IMR-90 (cell line): ENCODE measurements at regions of chr4 and their contacts with region 1.

Region 1: DNA sequence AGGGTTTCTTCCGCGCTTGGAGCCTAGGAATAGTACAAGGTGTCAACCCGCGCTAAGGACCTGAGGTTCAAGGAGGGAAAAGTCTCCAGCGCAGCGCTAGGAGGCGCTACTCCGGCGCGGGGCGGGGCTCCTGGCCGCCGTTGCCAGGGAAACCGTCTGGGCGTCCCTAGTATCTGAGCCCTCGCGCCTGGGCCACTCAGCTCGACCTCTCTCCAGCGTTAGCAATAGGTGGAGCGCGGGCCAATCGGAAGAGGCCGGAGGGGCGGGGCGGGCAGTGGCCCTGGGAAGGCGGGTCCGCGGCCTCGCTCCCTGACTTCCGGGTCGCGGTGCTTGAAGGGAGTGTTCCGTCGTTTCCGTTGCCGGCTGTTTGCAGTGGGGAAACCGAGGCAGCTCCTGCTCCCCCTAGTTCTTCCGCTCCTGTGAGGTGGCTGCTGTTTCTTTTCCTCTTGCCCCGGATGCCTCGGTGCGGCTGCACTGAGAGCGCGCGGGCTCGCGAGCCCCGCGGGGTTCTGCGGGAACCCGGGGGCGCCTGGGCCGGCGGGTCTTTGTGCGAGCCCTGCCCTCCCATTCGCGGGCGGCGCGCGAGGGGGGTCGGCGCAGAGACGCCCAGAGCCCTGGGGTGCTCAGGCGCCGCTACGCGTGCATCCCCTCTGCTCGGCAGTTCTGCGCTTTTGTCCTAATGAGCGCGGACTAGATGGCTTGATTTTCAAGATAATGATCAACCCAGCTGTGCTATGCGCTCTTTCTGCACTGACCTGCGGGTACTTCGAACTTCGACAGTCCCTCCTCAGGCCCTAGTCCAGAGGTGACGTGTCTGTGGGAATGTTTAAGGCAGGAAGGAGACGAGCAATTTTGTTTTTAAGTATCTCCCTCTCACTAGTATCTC is at the start of gene ELMOD2:
- DNase-seq: peak; percentile 95
- ATAC-seq: peak; percentile 100
- H3K4me3 ChIP-seq: peak within 1 kb of the TSS; percentile 85
- H3K27ac ChIP-seq: peak within 1 kb of the TSS; percentile 76
- H3K4me1 ChIP-seq: no peaks in the 10 kb centered on the region
- H3K27me3 ChIP-seq: no peaks in the 10 kb centered on the region
- CTCF ChIP-seq: peak; percentile 93
- POLR2A ChIP-seq: peak; percentile 73
- RAD21 ChIP-seq: peak; percentile 41
- total RNA-seq, gene ELMOD2: 10.6 and 30.0 TPM in 2 replicates

Region 2: GRCh38 chr4:140373328-140374129 is 150.6 kb before region 1 on chr4 and contains the start of gene SCOC:
- CTCF ChIA-PET with region 1: no interaction called
- POLR2A ChIA-PET with region 1: no interaction called
- dilution Hi-C with region 1: no loop called
- in situ Hi-C with region 1: no loop called
- intact Hi-C with region 1: loop called (anchors 5 kb)
- DNase-seq: peak; percentile 99
- ATAC-seq: peak; percentile 96
- H3K4me3 ChIP-seq: peak within 1 kb of the TSS; percentile 75
- H3K27ac ChIP-seq: peak within 1 kb of the TSS; percentile 63
- H3K4me1 ChIP-seq: no peaks in the 10 kb centered on the region; the same call in 1 of the 2 replicates
- H3K27me3 ChIP-seq: no peaks in the 10 kb centered on the region
- CTCF ChIP-seq: no peak
- POLR2A ChIP-seq: peak; percentile 79
- RAD21 ChIP-seq: no peak
- total RNA-seq, gene SCOC: 12.9 and 51.7 TPM in 2 replicates